Dorsolateral prefrontal cortex (tissue), 120 donors: ENCODE measurements at regions of chr4 and their contacts with region 1.

Region 1: GRCh38 chr4:114921790-114922591 is 191.4 kb downstream of the NDST4 start:
- DNase-seq: no peak
- H3K4me3 ChIP-seq: no peak overlapping the region
- H3K27ac ChIP-seq: no peak overlapping the region
- H3K27me3 ChIP-seq: peaks cover 0 to 4% (median 0%) of the 10 kb centered on the region in 45 donors
- CTCF ChIP-seq: no peak

Region 2: DNA sequence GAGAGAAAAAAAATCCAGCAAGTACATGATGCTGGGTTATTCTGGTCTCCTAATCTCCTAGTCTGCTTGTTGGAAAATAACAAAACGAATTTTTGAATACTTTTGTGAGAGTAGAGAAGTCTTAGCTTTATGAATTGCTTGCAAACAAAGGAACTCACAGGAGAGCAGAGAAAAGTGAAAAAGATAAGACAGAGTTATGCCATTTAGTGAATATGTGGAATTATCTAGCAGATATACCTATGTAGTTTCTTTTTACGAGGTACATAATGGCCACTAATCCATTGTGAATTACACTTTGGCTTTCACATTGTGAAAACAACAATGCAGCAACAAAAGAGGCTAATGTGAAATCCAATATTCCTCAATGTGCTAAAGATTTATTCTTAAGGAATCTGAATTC is 35.2 kb before region 1 on chr4:
- intact Hi-C with region 1: loop called in 1 of 2 experiments (anchors 5 kb)
- DNase-seq: no peak
- H3K4me3 ChIP-seq: no peak overlapping the region
- H3K27ac ChIP-seq: no peak overlapping the region
- H3K27me3 ChIP-seq: no peaks in the 10 kb centered on the region
- CTCF ChIP-seq: no peak

Region 3: GRCh38 chr4:115042496-115042895 is 120.5 kb after region 1 on chr4:
- intact Hi-C with region 1: no loop called
- DNase-seq: no peak
- H3K4me3 ChIP-seq: no peak overlapping the region
- H3K27ac ChIP-seq: no peak overlapping the region
- H3K27me3 ChIP-seq: no peaks in the 10 kb centered on the region
- CTCF ChIP-seq: no peak

Region 4: GRCh38 chr4:115159141-115159540 is 237.2 kb after region 1 on chr4:
- intact Hi-C with region 1: no loop called
- DNase-seq: no peak
- H3K4me3 ChIP-seq: no peak overlapping the region
- H3K27ac ChIP-seq: no peak overlapping the region
- H3K27me3 ChIP-seq: no peaks in the 10 kb centered on the region
- CTCF ChIP-seq: no peak

Region 5: DNA sequence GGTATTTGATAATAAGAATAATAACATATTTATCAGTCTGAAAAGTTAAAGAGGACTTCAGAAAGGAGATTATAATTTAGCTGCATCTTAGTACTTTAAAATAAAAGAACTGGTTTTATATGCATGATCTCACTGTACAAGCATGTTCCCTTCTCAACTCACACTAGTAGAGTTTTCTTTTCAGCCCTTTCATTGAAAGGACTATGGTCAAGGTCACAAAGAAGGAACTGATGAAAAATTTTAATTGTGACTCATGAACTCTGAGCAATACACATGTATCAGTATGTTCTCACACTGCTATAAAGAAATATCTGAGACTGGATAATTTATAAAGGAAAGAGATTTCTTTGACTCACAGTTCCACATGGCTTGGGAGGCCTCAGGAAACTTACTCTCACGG is 265.1 kb after region 1 on chr4:
- intact Hi-C with region 1: no loop called
- DNase-seq: no peak
- H3K4me3 ChIP-seq: no peak overlapping the region
- H3K27ac ChIP-seq: no peak overlapping the region
- H3K27me3 ChIP-seq: no peaks in the 10 kb centered on the region
- CTCF ChIP-seq: no peak

Region 6: DNA sequence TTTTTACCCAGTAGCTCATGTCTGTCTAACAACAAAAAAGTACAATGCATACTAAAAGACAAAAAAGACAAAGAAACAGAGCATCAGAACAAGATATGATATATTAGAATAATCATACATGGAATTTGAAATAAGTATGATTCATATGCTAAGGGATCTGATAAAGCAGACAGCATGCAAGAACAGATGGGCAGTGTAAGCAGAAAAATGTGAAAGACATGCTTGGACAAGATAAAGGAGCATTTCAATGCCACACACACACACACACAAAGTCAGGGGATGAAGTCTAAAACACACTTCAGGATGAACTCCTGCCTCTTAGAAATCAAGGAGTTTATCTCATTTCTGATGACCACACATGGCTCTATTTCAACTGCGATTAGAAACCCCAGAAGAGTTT is 841.1 kb after region 1 on chr4:
- intact Hi-C with region 1: no loop called
- DNase-seq: no peak
- H3K4me3 ChIP-seq: no peak overlapping the region
- H3K27ac ChIP-seq: no peak overlapping the region
- H3K27me3 ChIP-seq: no peaks in the 10 kb centered on the region
- CTCF ChIP-seq: no peak